Panc1 (cell line): ENCODE measurements at regions of chr3 and their contacts with region 1.

Region 1: GRCh38 chr3:60225848-60226247 is 1025.4 kb downstream of the FHIT start:
- DNase-seq: no peak
- ATAC-seq: no peak
- H3K4me3 ChIP-seq: no peak overlapping the region
- H3K27ac ChIP-seq: no peak overlapping the region
- H3K4me1 ChIP-seq: no peaks in the 10 kb centered on the region
- H3K27me3 ChIP-seq: no peaks in the 10 kb centered on the region
- CTCF ChIP-seq: no peak

Region 2: DNA sequence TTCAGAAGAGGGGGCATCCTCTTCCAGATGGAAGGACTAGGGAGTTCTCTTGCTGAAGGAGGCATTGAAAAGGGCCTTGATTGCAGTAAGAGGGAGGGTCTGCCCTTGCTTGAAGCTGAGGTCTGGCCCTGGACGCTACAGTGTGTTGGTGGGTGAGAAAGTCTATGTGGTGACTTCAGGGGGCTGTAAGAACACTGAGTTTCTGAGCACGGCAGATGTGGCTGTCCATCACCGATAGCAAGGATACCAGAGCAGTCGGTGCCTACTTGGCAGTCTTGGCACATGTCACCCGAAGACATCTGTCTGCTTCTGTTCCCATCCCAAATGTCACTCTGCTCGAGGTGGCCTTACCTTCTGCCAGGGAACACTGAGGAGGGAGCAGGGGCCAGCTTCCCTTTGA is 544.9 kb before region 1 on chr3:
- CTCF ChIA-PET with region 1: interaction called, 11 read pairs
- POLR2A ChIA-PET with region 1: no interaction called
- in situ Hi-C with region 1: no loop called
- intact Hi-C with region 1: no loop called
- DNase-seq: no peak
- ATAC-seq: no peak
- H3K4me3 ChIP-seq: no peak overlapping the region
- H3K27ac ChIP-seq: no peak overlapping the region
- H3K4me1 ChIP-seq: no peaks in the 10 kb centered on the region
- H3K27me3 ChIP-seq: no peaks in the 10 kb centered on the region
- CTCF ChIP-seq: no peak

Region 3: DNA sequence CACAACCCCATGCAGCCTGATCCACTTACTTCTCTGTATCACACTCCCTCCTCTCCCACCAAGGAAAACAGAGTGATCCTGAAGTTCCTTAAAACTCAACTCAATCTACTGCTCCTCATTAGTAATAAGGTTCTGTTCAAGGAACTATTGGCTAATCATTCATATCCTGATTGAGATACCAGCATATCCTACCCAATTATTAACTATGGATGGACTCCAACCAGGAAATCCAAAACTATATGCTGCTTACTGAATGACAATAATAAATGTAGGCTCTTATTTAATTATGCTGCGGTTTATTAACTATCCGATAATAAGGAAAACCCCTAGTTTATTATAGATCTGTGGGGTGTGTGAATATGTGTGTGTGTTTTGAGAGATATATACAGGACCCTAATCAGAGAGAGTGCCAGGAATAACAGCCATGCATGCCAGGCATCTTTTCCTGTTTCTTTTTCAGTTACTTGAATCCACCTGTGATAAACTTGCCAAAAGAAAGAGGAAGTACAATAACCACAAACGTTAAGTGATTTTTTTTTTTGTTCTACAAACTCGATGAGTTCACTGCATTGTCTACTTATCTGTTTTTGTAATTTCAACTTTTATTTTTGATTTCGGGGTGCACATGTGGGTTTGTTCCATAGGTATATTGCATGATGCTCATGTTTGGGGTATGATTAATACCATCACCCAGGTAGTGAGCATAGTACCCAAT is 144.3 kb before region 1 on chr3:
- CTCF ChIA-PET with region 1: no interaction called
- POLR2A ChIA-PET with region 1: no interaction called
- in situ Hi-C with region 1: no loop called
- intact Hi-C with region 1: no loop called
- DNase-seq: no peak
- ATAC-seq: no peak
- H3K4me3 ChIP-seq: no peak overlapping the region
- H3K27ac ChIP-seq: no peak overlapping the region
- H3K4me1 ChIP-seq: no peaks in the 10 kb centered on the region
- H3K27me3 ChIP-seq: no peaks in the 10 kb centered on the region
- CTCF ChIP-seq: no peak